GM12878 (cell line): ENCODE measurements at regions of chr16 and their contacts with region 1.

Region 1: DNA sequence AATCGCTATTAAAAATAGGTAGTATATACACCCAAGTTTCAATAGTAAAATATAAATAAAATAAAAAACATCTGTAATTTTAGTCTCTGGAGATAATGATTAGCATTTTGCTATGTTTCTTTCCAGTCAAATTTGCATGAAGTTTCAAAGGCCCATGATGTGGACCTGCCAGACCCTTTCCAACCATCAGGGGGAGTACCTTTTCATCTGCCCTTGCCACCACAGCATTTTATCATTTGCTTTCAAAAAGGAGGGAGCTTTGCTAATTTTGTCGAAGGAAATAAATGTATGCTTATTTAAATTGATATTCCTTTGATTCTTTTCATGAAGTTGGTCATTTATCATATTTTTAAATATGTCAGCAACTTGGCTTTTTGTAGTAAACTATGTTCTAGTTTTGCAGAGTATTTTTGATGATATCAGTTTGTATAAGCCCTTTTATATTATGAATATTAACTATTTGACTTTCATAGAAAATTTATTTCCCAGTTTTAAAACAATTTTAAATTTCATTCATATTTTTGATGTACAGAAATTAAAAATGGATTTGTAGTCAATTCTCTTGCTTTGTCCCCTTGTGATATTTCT is 115.2 kb upstream of the NETO2 start:
- DNase-seq: peak; percentile 5
- ATAC-seq: peak; percentile 88
- H3K4me3 ChIP-seq: no peak overlapping the region
- H3K27ac ChIP-seq: no peak overlapping the region
- H3K4me1 ChIP-seq: no peaks in the 10 kb centered on the region
- H3K27me3 ChIP-seq: no peaks in the 10 kb centered on the region
- CTCF ChIP-seq: peak; percentile 51 to 64 (median 63); a peak in 5 of 6 replicates
- EP300 ChIP-seq: no peak
- POLR2A ChIP-seq: no peak
- RAD21 ChIP-seq: peak; percentile 59

Region 2: GRCh38 chr16:46883690-46884512 is 375.1 kb before region 1 on chr16 and contains the start of gene GPT2:
- CTCF ChIA-PET with region 1: no interaction called
- POLR2A ChIA-PET with region 1: no interaction called
- RAD21 ChIA-PET with region 1: no interaction called
- SMC1A ChIA-PET with region 1: no interaction called
- in situ Hi-C with region 1: no loop called
- intact Hi-C with region 1: no loop called
- DNase-seq: peak; percentile 69
- ATAC-seq: peak; percentile 99
- H3K4me3 ChIP-seq: peak within 1 kb of the TSS; percentile 93
- H3K27ac ChIP-seq: peak within 1 kb of the TSS; percentile 8; the same call in 1 of the 2 replicates
- H3K4me1 ChIP-seq: peaks cover 7% of the 10 kb centered on the region; the same call in 1 of the 2 replicates
- H3K27me3 ChIP-seq: 0 out of 4 replicates have a peak, but pooled peaks cover 0 to 2% of the 10 kb centered on the region in 2 experiments
- CTCF ChIP-seq: no peak
- EP300 ChIP-seq: no peak
- POLR2A ChIP-seq: peak; percentile 82
- RAD21 ChIP-seq: no peak
- polyA plus RNA-seq, gene GPT2: 0.45 to 0.80 TPM

Region 3: DNA sequence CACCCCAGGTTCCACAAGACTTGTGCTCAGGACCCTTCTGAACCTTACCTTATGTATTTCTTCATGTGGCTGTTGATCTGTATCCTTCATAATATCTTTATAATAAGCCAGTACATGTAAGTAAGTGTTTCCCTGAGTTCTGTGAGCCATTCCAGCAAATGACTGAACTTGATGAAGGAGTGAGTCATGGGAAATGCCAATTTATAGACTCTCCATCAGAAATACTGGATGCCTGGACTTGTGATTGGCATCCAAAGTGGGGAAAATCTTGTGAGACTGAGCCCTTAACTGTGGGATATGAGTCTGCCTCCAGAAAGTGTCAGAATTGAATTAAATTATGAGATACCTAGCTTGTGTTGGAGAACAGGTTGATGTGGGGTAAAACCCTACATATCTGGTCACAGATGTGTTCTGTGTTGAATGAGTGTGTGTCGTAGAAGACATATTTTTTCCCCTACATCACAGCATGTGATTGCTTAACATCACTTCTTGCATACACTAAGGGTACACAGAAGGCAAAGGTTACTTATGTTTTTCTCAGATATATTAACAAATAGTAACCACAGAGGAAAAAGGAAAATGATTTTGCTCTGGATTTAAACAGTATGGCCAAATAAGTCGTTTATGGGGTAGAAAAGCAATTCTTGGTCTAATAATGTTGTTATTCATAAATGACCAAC is 45.1 kb before region 1 on chr16:
- CTCF ChIA-PET with region 1: no interaction called
- POLR2A ChIA-PET with region 1: no interaction called
- RAD21 ChIA-PET with region 1: no interaction called
- SMC1A ChIA-PET with region 1: no interaction called
- in situ Hi-C with region 1: no loop called
- intact Hi-C with region 1: no loop called
- DNase-seq: no peak
- ATAC-seq: no peak
- H3K4me3 ChIP-seq: no peak overlapping the region
- H3K27ac ChIP-seq: no peak overlapping the region
- H3K4me1 ChIP-seq: no peaks in the 10 kb centered on the region
- H3K27me3 ChIP-seq: no peaks in the 10 kb centered on the region
- CTCF ChIP-seq: no peak
- EP300 ChIP-seq: no peak
- POLR2A ChIP-seq: no peak
- RAD21 ChIP-seq: no peak

Region 4: GRCh38 chr16:47316442-47317015 is 57.6 kb after region 1 on chr16:
- CTCF ChIA-PET with region 1: no interaction called
- POLR2A ChIA-PET with region 1: no interaction called
- RAD21 ChIA-PET with region 1: no interaction called
- SMC1A ChIA-PET with region 1: no interaction called
- in situ Hi-C with region 1: no loop called
- intact Hi-C with region 1: no loop called
- DNase-seq: no peak
- ATAC-seq: no peak
- H3K4me3 ChIP-seq: no peak overlapping the region
- H3K27ac ChIP-seq: no peak overlapping the region
- H3K4me1 ChIP-seq: peaks cover 6% of the 10 kb centered on the region
- H3K27me3 ChIP-seq: no peaks in the 10 kb centered on the region
- CTCF ChIP-seq: no peak
- EP300 ChIP-seq: no peak
- POLR2A ChIP-seq: no peak
- RAD21 ChIP-seq: no peak

Region 5: DNA sequence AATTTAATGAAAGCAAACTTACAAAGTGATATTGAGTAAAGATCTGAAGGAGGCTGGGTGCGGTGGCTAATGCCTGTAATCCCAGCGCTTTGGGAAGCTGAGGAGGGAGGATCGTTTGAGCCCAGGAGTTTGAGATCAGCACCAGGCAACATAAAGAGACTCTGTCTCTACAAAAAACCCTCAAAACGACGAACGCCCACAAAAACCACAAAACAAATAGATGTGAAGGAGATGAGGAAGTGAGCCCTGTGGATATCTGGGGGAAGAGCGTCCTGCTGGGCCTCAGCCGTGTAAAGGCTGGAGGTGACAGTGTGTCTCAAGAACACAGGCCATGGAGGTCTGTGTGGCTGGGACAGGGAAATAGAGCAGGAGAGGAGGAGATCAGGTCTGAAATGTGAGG is 133.1 kb after region 1 on chr16:
- CTCF ChIA-PET with region 1: no interaction called
- POLR2A ChIA-PET with region 1: no interaction called
- RAD21 ChIA-PET with region 1: no interaction called
- SMC1A ChIA-PET with region 1: interaction called, 3 read pairs
- in situ Hi-C with region 1: no loop called
- intact Hi-C with region 1: loop called (anchors 10 kb)
- DNase-seq: peak; percentile 40
- ATAC-seq: peak; percentile 97
- H3K4me3 ChIP-seq: no peak overlapping the region
- H3K27ac ChIP-seq: no peak overlapping the region
- H3K4me1 ChIP-seq: no peaks in the 10 kb centered on the region
- H3K27me3 ChIP-seq: no peaks in the 10 kb centered on the region
- CTCF ChIP-seq: no peak
- EP300 ChIP-seq: peak in 1 of 2 experiments; percentile 54; a peak in 1 of 4 replicates
- POLR2A ChIP-seq: no peak
- RAD21 ChIP-seq: peak; percentile 22; the same call in 1 of the 2 replicates